GM18951 (cell line): ENCODE measurements at regions of chr13 and their contacts with region 1.

Region 1: DNA sequence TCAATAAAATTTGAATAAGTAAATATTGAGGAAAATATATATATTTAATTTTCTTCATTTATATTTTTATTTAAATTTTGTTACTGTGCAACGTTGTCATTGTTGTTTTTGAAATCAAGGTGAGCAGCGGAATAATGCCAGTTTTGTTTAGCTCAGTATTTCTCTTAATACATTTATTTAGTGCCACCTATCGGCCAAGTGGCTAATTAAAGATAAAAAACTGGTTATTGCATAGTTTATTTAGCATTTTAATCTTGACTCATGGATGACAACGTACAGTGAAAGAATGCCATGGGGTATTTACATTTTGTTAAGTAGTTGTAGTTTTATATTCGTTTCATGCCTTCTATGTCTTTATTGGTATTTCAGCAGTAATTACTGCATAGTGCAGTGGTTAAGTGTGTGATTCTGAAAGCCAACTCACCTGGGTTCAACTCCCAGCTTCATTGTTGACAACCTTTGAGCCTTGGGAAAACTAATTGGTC is 265.9 kb downstream of the MYO16 start:
- POLR2A ChIP-seq: no peak

Region 2: DNA sequence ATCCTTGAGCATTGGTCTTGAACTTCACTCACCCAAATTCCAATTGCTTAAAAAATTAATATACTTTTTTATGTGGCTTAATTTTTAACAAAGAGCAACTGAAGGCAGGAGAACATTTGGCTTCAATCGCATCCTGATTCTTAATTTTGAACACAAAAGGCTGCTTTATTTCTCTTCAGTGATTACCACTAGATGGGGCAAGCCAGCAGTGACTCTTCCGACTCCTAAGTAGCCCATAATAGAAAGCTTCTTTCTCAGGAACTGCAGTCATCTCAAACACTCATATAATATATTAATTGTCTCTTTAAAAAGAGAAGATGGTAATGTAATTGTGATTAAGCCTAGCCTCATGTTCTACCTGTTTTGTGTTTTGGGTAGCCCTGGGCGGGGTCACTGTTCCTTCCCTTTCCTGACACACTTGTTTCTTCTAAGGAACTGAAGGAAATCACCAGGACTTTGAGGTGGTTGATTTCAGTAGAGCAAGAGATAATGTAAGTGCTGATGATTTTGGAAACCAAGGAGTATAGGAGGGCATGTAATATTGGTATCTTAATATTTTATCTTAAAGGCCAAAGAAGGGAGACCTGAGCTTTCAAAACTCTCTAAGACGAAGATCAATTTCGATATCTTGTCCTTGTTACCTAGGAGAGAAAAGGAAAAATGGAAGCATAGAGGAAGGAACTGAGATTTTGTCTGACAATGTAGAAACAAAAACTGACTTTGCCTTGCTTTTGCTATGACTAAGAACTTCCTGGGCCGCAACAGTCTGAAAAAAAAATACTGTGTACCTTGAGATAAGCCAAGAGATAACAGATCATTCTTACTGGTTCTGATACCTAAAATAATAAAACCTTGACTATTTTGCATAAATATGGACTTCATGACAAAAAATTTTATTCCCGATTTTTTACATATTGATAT is 552.6 kb before region 1 on chr13:
- in situ Hi-C with region 1: loop called (anchors 25 kb)
- POLR2A ChIP-seq: no peak